ENCODE measurements at regions of chr1 and their contacts with region 1.

Region 1: DNA sequence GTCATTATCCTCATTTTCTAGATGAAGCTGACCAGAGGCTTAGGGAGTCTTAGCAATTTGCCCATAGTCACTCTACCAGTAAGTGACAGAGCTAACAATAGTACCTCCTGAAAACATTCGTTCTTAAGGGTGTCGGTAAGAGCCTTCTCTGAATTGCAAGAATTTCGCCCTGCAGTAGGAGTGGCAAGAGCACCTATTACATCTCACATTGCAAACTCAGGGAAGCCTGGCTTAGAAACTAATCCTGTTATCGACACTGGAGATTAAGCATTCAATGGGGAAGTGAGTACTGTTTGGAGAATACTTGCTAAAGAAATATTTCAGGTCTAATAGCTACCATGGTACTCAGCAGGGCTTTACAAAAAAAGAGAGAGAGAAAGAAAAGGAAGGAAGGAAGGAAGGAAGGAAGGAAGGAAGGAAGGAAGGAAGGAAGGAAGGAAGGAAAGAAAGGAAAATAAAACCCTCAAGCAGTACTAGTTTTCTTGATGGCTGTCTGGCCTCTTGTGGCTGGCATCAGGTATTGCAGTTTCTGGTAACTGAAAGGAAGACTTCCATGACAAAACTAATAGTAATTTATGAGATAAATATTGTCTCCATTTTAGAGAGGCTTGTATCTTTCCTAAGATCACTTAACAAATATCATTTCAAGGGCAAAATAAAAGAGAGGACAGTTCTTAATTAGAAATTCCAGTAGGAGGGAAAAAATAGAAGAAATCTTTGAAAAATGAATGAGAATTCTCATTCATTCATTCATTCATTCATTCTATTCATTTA is 10.4 kb downstream of the C1orf226 start:
- DNase-seq: no peak
- H3K4me3 ChIP-seq: no peak overlapping the region
- H3K27ac ChIP-seq: no peak overlapping the region
- H3K27me3 ChIP-seq: peaks cover 26% of the 10 kb centered on the region
- CTCF ChIP-seq: peak; percentile 91

Region 2: DNA sequence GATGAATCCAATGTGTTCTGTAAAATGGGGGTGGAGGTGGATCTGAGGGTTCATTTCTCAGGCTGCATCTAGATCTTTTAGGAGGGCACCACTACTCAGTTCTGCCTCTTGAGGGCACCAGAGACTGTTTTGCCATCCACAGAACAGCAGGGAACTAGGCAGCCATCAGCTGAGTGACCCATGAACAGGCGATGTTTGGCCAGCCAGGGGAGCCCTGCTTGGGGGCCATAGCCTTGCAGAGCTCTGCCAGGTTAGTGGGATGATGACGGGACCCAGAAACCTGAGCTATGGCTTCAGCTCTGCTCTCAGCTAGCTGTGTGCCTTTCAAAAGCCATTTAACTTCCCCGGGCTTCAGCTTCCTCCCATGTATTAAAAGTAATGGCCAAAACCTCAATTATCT is 335.9 kb before region 1 on chr1:
- CTCF ChIA-PET with region 1: interaction called, 33 read pairs
- POLR2A ChIA-PET with region 1: no interaction called
- DNase-seq: peak; percentile 23
- H3K4me3 ChIP-seq: no peak overlapping the region
- H3K27ac ChIP-seq: no peak overlapping the region
- H3K27me3 ChIP-seq: peaks cover 15% of the 10 kb centered on the region
- CTCF ChIP-seq: peak; percentile 98

Region 3: GRCh38 chr1:162349635-162350330 is 42.2 kb before region 1 on chr1:
- CTCF ChIA-PET with region 1: interaction called, 13 read pairs
- POLR2A ChIA-PET with region 1: no interaction called
- DNase-seq: peak; percentile 33
- H3K4me3 ChIP-seq: no peak overlapping the region
- H3K27ac ChIP-seq: no peak overlapping the region
- H3K27me3 ChIP-seq: no peaks in the 10 kb centered on the region
- CTCF ChIP-seq: no peak

Region 4: GRCh38 chr1:162381383-162381782 is 10.6 kb before region 1 on chr1 and contains the start of gene C1orf226:
- CTCF ChIA-PET with region 1: interaction called, 13 read pairs
- POLR2A ChIA-PET with region 1: no interaction called
- DNase-seq: no peak
- H3K4me3 ChIP-seq: no peak within 1 kb of the TSS
- H3K27ac ChIP-seq: no peak within 1 kb of the TSS
- H3K27me3 ChIP-seq: peaks cover 9% of the 10 kb centered on the region
- CTCF ChIP-seq: no peak
- polyA plus RNA-seq, gene C1orf226: 0.07 and 0.11 TPM in 2 replicates